ENCODE measurements at regions of chr3 and their contacts with region 1.

Region 1: DNA sequence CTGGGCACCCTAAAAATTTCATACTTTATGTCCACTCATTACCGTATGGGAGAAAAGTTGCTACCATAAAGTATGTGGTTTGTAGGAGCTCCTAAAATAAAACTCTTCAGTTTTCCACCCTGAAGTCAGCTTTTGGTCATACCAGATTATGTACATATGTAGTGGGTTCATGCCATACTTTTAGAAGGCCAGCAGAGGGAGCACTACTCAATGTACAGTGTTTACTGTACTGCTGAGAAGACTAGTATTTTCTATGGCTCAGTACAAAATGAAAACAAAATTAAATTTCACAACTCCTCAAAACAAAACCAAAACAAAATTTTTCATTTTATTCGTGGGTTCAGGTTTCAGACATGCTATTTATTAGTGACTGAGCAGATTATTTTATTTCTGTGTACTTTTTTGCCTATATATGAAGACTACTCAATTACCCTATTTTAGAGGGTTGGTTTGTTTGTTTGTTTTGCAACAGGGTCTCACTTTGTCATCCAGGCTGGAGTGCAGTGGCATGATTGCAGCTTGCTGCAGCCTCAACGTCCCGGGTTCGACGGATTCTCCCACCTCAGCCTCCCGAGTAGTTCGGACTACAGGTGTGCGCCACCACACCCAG is 24.3 kb downstream of the NXPE3 start:
- DNase-seq: no peak
- ATAC-seq: peak; percentile 100
- H3K4me3 Mint-ChIP-seq: no peak overlapping the region
- H3K27ac Mint-ChIP-seq: no peak overlapping the region
- H3K4me1 Mint-ChIP-seq: peaks cover 7% of the 10 kb centered on the region
- H3K27me3 Mint-ChIP-seq: no peaks in the 10 kb centered on the region
- CTCF ChIP-seq: no peak

Region 2: GRCh38 chr3:101495552-101495951 is 307.7 kb before region 1 on chr3:
- CTCF ChIA-PET with region 1: no interaction called
- POLR2A ChIA-PET with region 1: no interaction called
- intact Hi-C with region 1: no loop called
- DNase-seq: no peak
- ATAC-seq: no peak
- H3K4me3 Mint-ChIP-seq: no peak overlapping the region
- H3K27ac Mint-ChIP-seq: no peak overlapping the region
- H3K4me1 Mint-ChIP-seq: peaks cover 10% of the 10 kb centered on the region
- H3K27me3 Mint-ChIP-seq: no peaks in the 10 kb centered on the region
- CTCF ChIP-seq: no peak

Region 3: DNA sequence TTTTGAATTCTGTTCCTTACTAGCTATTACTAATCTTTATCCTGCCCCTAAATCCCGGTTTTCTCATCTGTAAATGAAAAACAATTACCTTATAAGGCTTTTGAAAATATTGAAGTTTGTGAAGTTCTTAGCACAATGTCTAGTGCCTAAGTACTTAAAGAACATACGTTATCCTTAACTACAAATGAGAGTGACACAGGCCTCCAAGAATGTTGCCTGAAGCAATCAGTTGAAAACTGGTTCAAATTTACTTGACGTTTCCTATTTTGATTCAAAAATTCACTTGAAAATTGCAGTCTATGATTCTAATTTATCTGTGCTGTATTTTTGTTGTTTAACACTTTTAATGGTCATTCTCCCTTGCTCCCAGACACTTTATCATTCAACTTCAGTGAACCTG is 293.5 kb before region 1 on chr3:
- CTCF ChIA-PET with region 1: no interaction called
- POLR2A ChIA-PET with region 1: no interaction called
- intact Hi-C with region 1: no loop called
- DNase-seq: no peak
- ATAC-seq: no peak
- H3K4me3 Mint-ChIP-seq: no peak overlapping the region
- H3K27ac Mint-ChIP-seq: no peak overlapping the region
- H3K4me1 Mint-ChIP-seq: peaks cover 37% of the 10 kb centered on the region
- H3K27me3 Mint-ChIP-seq: no peaks in the 10 kb centered on the region
- CTCF ChIP-seq: no peak

Region 4: DNA sequence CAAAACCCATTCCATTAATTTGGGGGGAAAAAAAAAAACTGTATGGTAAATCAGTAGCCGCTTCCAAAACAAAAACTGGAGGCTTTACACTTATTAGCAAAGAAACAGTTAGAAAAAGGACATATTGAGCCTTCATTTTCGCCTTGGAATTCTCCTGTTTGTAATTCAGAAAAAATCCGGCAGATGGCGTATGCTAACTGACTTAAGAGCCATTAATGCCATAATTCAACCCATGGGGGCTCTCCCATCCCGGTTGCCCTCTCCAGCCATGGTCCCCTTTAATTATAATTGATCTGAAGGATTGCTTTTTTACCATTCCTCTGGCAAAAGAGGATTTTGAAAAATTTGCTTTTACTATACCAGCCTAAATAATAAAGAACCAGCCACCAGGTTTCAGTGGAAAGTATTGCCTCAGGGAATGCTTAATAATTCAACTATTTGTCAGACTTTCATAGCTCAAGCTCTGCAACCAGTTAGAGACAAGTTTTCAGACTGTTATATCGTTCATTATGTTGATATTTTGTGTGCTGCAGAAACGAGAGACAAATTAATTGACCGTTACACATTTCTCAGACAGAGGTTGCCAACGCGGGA is 107.4 kb before region 1 on chr3:
- CTCF ChIA-PET with region 1: interaction called, 4 read pairs
- POLR2A ChIA-PET with region 1: no interaction called
- intact Hi-C with region 1: loop called (anchors 1 kb)
- DNase-seq: no peak
- ATAC-seq: no peak
- H3K4me3 Mint-ChIP-seq: no peak overlapping the region
- H3K27ac Mint-ChIP-seq: no peak overlapping the region
- H3K4me1 Mint-ChIP-seq: peaks cover 3% of the 10 kb centered on the region
- H3K27me3 Mint-ChIP-seq: no peaks in the 10 kb centered on the region
- CTCF ChIP-seq: peak; percentile 67

Region 5: GRCh38 chr3:101791778-101792177 is 11.5 kb before region 1 on chr3:
- CTCF ChIA-PET with region 1: interaction called, 12 read pairs
- POLR2A ChIA-PET with region 1: interaction called, 4 read pairs
- intact Hi-C with region 1: no loop called
- DNase-seq: no peak
- ATAC-seq: peak; percentile 90
- H3K4me3 Mint-ChIP-seq: peak overlapping the region; percentile 50
- H3K27ac Mint-ChIP-seq: peak overlapping the region; percentile 37
- H3K4me1 Mint-ChIP-seq: peaks cover 31% of the 10 kb centered on the region
- H3K27me3 Mint-ChIP-seq: no peaks in the 10 kb centered on the region
- CTCF ChIP-seq: no peak

Region 6: GRCh38 chr3:103195212-103195611 is 1391.9 kb after region 1 on chr3:
- CTCF ChIA-PET with region 1: no interaction called
- POLR2A ChIA-PET with region 1: no interaction called
- intact Hi-C with region 1: no loop called
- DNase-seq: no peak
- ATAC-seq: no peak
- H3K4me3 Mint-ChIP-seq: no peak overlapping the region
- H3K27ac Mint-ChIP-seq: no peak overlapping the region
- H3K4me1 Mint-ChIP-seq: no peaks in the 10 kb centered on the region
- H3K27me3 Mint-ChIP-seq: no peaks in the 10 kb centered on the region
- CTCF ChIP-seq: no peak

Measured in activated B cell treated with CpG ODN at 0.5 μM for 24 hours (primary cell).